Left lung (tissue), 14 donors: ENCODE measurements at regions of chr7 and their contacts with region 1.

Region 1: GRCh38 chr7:20778063-20778721 is 8.5 kb downstream of the SP8 start:
- DNase-seq: peak in 2 of 4 donors; percentile 68 to 83
- ATAC-seq: peak; percentile 100
- H3K4me3 ChIP-seq: peak overlapping the region in 1 of 2 donors; percentile 7
- H3K27ac ChIP-seq: no peak overlapping the region
- H3K4me1 ChIP-seq: peaks cover 4 to 14% of the 10 kb centered on the region in 2 donors
- H3K27me3 ChIP-seq: peaks cover 100% of the 10 kb centered on the region in 2 donors
- CTCF ChIP-seq: peak; percentile 57 to 65

Region 2: DNA sequence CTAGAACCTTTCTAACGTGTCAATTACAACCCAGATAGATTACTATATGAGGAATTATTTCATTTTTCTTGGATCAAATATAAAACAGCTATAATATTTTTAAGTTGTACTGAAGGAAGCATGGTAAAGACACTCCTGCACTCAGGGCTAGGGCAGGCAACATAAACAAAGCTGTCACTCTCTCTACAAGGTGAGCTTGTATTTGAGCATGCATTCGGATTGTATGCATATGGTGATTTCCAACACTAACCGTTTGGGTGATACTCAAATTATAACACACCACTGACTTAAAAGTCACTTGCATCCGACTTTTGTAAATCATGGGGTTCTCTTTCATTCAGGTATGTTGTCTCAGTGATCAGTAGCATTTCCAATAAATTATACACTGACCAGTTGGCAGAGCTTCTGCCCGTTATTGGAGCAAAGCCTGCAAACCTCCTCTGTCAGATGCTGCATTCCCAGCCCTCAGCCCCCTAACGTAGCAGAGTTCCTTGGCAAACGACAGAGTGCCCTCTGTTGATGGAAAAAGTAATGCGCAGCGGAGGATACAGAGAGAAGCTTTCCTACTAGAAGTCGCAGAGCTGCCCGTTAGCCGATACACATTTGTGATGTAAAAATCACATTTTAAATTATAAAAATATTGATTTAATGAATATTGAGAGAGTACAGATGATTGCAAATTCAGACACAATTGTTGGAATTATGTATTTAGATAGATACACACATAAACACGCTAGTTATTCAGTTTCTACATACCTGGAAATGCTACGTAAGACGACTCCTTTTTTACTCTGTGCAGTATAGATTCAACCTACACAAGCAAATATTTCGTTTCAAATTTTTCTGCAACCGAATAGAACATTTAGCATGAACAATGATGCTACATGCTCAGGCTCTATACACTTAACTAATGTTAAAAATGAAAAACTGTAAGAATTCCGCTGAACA is 475.8 kb after region 1 on chr7:
- intact Hi-C with region 1: loop called in 1 of 2 experiments (anchors 5 kb)
- DNase-seq: peak in 3 of 4 donors; percentile 34 to 80 (median 51)
- ATAC-seq: peak; percentile 87
- H3K4me3 ChIP-seq: no peak overlapping the region
- H3K27ac ChIP-seq: no peak overlapping the region
- H3K4me1 ChIP-seq: no peaks in the 10 kb centered on the region
- H3K27me3 ChIP-seq: peaks cover 50 to 81% of the 10 kb centered on the region in 2 donors
- CTCF ChIP-seq: peak; percentile 14 to 35